ENCODE measurements at regions of chr10 and their contacts with region 1.

Region 1: DNA sequence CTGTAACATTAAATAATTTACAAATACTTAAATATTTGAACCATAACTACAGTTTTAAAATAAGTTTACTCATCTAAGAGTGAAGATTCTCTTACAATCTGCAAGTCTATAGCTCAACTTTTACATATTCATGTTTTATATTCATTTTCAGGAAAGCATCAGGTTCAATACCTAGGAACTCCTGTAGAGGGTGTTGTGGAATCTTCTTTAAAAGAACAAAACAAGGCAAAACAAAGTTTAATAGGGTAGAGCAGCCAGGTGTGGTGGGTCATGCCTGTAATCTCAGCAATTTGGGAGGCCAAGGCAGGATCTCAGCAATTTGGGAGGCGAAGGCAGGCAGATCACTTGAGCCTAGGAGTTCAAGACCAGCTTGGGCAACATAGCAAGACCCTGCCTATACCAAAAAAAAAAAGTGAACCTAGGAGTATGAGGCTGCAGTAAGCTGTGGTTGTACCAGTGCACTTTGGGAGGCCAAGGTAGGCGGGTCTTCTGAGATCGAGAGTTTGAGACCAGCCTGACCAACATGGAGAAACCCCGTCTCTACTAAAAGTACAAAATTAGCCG is 45.1 kb downstream of the ST8SIA6 start:
- DNase-seq: peak; percentile 61
- H3K4me3 ChIP-seq: no peak overlapping the region
- H3K27ac ChIP-seq: no peak overlapping the region
- H3K4me1 ChIP-seq: no peaks in the 10 kb centered on the region
- H3K27me3 ChIP-seq: no peaks in the 10 kb centered on the region
- CTCF ChIP-seq: peak; percentile 43 to 46
- POLR2A ChIP-seq: no peak

Region 2: DNA sequence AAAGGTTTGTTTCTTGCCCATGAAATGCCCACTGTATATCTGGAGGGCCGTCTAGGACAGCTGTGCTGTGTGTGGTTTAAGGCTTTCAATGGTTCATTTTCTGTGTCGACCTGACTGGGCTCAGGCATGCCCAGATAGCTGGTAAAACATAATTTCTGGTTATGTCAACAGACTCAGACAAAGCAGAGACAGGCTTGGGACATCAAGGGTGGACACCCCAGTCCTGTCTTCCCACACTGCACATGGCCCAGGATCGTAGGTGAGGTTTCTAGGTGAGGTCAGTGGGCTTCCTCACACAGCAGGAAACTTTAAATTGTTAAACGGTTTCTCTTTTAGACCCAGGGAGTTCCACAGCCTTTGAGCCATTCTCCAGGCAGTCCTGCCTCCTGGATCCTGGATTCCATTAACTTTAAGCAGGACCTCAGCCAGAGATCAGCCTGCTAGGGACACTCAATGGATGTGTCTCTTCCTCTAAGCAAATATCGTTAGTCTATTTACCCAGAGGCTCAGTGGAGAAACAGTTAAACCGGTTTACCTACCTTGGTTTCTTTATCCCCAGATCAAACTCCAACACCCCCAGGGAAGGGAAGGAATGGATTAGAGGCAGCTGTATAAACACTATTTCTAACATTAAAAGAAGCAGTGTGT is 21.3 kb before region 1 on chr10:
- CTCF ChIA-PET with region 1: interaction called, 11 read pairs
- POLR2A ChIA-PET with region 1: interaction called, 3 read pairs
- dilution Hi-C with region 1: no loop called
- intact Hi-C with region 1: no loop called
- DNase-seq: no peak
- H3K4me3 ChIP-seq: no peak overlapping the region
- H3K27ac ChIP-seq: no peak overlapping the region
- H3K4me1 ChIP-seq: no peaks in the 10 kb centered on the region
- H3K27me3 ChIP-seq: no peaks in the 10 kb centered on the region
- CTCF ChIP-seq: no peak
- POLR2A ChIP-seq: no peak

Region 3: DNA sequence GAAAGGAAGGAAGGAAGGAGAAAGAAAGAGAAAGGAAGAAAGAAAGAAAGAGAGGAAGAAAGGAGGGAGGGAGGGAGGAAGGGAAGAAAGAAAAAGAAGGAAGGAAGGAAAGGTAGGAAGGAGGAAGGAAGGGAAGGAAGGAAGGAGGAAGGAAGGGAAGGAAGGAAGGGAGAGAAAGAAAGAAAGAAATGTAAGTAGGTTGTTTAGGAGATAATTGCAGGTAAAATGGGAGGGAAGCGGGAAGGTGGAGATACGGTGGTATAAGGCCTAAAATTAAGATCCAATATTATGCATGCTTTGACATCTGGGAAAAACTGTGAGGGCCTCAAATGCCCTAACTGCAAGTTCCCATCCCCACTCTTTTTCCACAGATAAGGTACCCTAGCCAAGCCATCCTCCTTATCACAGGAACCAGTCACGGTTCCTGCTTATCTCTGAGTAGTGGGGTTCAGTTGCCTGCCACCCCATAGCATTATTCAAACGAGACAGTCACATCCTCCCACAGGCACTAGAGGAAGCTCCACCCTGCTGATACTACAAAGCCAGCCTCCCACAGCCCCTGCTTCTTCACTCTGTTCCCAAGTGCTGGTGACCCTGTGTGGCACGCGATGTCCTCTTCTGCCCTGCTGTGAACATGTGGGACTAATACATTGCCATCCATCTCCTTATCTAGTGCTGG is 16.5 kb after region 1 on chr10:
- CTCF ChIA-PET with region 1: interaction called, 22 read pairs
- POLR2A ChIA-PET with region 1: no interaction called
- dilution Hi-C with region 1: no loop called
- intact Hi-C with region 1: no loop called
- DNase-seq: peak; percentile 78
- H3K4me3 ChIP-seq: no peak overlapping the region
- H3K27ac ChIP-seq: no peak overlapping the region
- H3K4me1 ChIP-seq: peaks cover 17% of the 10 kb centered on the region
- H3K27me3 ChIP-seq: no peaks in the 10 kb centered on the region
- CTCF ChIP-seq: no peak
- POLR2A ChIP-seq: no peak

Region 4: DNA sequence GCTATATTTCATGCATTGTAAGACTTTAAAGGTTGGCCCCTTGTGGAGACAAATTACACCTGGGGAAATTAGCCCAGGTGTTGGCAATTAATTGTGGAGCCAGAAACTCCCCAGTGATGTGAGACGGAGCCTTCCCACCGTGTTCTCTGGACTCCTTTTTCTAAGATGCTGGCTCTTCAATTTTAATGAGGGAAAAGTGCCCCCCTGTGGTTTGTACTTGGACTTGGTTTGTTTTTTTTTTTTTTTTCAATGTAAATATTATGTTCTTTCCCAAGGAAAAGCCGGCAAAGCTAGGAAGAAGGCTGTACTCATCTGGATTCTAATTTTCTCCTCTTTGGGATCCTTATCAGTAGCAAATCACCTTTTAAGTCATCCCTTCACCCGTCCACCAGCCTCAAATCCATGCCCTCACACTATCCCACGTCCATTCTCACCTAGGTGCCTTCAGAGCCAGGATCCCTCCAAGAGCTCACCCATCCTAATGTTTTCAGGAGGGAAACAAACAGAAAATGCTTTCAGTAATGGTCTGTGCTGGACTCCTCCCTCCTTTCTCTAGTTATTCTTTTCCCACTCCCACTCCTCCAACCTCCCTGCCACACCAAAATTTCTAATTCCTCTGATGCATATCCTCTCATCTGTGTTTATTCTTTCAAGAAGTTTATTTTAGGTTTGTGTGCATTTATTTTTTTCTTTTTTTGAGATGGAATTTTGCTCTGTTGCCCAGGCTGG is 65.5 kb after region 1 on chr10:
- CTCF ChIA-PET with region 1: interaction called, 15 read pairs
- POLR2A ChIA-PET with region 1: no interaction called
- dilution Hi-C with region 1: no loop called
- intact Hi-C with region 1: loop called (anchors 2 kb)
- DNase-seq: peak; percentile 40
- H3K4me3 ChIP-seq: no peak overlapping the region
- H3K27ac ChIP-seq: no peak overlapping the region
- H3K4me1 ChIP-seq: peaks cover 12% of the 10 kb centered on the region
- H3K27me3 ChIP-seq: no peaks in the 10 kb centered on the region
- CTCF ChIP-seq: peak in 1 of 2 donors; percentile 22
- POLR2A ChIP-seq: no peak

Region 5: GRCh38 chr10:17643755-17644484 is 234.7 kb after region 1 on chr10 and contains the start of gene STAM:
- CTCF ChIA-PET with region 1: interaction called, 10 read pairs
- POLR2A ChIA-PET with region 1: no interaction called
- dilution Hi-C with region 1: no loop called
- intact Hi-C with region 1: no loop called
- DNase-seq: peak; percentile 96
- H3K4me3 ChIP-seq: peak within 1 kb of the TSS; percentile 36 to 90 (median 84)
- H3K27ac ChIP-seq: peak within 1 kb of the TSS; percentile 95
- H3K4me1 ChIP-seq: peaks cover 21% of the 10 kb centered on the region
- H3K27me3 ChIP-seq: no peaks in the 10 kb centered on the region
- CTCF ChIP-seq: no peak
- POLR2A ChIP-seq: peak; percentile 76
- total RNA-seq, gene STAM: 20.0 and 20.6 TPM in 2 replicates

Region 6: GRCh38 chr10:17701301-17701700 is 292.0 kb after region 1 on chr10:
- CTCF ChIA-PET with region 1: no interaction called
- POLR2A ChIA-PET with region 1: no interaction called
- dilution Hi-C with region 1: no loop called
- intact Hi-C with region 1: no loop called
- DNase-seq: no peak
- H3K4me3 ChIP-seq: no peak overlapping the region
- H3K27ac ChIP-seq: no peak overlapping the region
- H3K4me1 ChIP-seq: no peaks in the 10 kb centered on the region
- H3K27me3 ChIP-seq: no peaks in the 10 kb centered on the region
- CTCF ChIP-seq: no peak
- POLR2A ChIP-seq: no peak

Measured in endothelial cell of umbilical vein (primary cell).